Mucosa of descending colon (tissue), 3 donors: ENCODE measurements at regions of chr9 and their contacts with region 1.

Region 1: GRCh38 chr9:76441551-76442322 is 17.2 kb upstream of the GCNT1 start:
- DNase-seq: no peak
- ATAC-seq: no peak
- H3K4me3 ChIP-seq: no peak overlapping the region
- H3K4me1 ChIP-seq: no peaks in the 10 kb centered on the region
- CTCF ChIP-seq: no peak

Region 2: DNA sequence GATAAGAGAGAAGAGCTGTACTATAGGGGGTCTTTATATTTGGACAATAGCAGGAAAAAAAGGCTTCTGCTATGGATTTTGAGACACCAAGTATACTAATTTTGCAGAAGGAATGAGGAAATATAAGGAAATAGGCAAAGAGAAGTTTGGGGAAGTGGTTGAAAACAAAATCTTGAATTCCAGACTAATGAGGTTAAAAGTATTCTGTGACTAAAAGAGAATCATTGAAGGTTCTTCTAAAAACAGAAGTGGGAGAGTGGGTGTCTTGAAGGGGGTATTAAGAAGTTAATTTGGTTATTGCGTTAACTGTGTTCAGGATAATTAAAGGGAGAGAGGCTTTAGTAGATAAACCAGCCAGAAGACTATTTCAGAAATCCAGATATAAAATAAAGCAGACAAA is 196.2 kb before region 1 on chr9:
- intact Hi-C with region 1: no loop called
- DNase-seq: no peak
- ATAC-seq: no peak
- H3K4me3 ChIP-seq: no peak overlapping the region
- H3K4me1 ChIP-seq: no peaks in the 10 kb centered on the region
- CTCF ChIP-seq: no peak

Region 3: GRCh38 chr9:76302947-76303940 is 138.5 kb before region 1 on chr9:
- intact Hi-C with region 1: no loop called
- DNase-seq: no peak
- ATAC-seq: peak; percentile 87
- H3K4me3 ChIP-seq: no peak overlapping the region
- H3K4me1 ChIP-seq: no peaks in the 10 kb centered on the region
- CTCF ChIP-seq: peak; percentile 21

Region 4: DNA sequence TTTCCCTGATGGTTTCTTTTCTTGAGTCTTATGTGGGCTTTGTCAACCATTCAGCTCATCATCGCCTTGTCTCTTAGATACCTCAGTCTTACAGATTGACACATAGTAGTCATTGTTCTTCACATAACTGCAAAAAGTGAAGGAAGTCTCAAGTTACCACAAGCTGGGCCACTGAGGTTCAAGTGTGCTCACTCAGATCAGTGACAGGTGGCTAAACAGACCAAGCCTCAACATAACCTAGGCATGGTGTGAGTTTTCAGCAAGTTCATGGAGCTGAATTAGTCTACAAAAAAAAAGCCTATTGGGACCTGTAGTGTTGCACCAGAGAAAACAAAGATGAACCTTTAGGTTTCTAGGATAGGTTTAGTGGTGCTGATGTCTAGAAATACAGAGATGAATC is 105.7 kb before region 1 on chr9:
- intact Hi-C with region 1: no loop called
- DNase-seq: no peak
- ATAC-seq: no peak
- H3K4me3 ChIP-seq: no peak overlapping the region
- H3K4me1 ChIP-seq: no peaks in the 10 kb centered on the region
- CTCF ChIP-seq: no peak

Region 5: GRCh38 chr9:76521244-76521681 is 79.5 kb after region 1 on chr9:
- intact Hi-C with region 1: no loop called
- DNase-seq: no peak
- ATAC-seq: no peak
- H3K4me3 ChIP-seq: no peak overlapping the region
- H3K4me1 ChIP-seq: no peaks in the 10 kb centered on the region
- CTCF ChIP-seq: no peak

Region 6: GRCh38 chr9:76662476-76663281 is 220.9 kb after region 1 on chr9:
- intact Hi-C with region 1: loop called in 1 of 2 experiments (anchors 5 kb)
- DNase-seq: peak in 1 of 3 donors; percentile 36
- ATAC-seq: peak; percentile 60
- H3K4me3 ChIP-seq: no peak overlapping the region
- H3K4me1 ChIP-seq: no peaks in the 10 kb centered on the region
- CTCF ChIP-seq: no peak

Region 7: DNA sequence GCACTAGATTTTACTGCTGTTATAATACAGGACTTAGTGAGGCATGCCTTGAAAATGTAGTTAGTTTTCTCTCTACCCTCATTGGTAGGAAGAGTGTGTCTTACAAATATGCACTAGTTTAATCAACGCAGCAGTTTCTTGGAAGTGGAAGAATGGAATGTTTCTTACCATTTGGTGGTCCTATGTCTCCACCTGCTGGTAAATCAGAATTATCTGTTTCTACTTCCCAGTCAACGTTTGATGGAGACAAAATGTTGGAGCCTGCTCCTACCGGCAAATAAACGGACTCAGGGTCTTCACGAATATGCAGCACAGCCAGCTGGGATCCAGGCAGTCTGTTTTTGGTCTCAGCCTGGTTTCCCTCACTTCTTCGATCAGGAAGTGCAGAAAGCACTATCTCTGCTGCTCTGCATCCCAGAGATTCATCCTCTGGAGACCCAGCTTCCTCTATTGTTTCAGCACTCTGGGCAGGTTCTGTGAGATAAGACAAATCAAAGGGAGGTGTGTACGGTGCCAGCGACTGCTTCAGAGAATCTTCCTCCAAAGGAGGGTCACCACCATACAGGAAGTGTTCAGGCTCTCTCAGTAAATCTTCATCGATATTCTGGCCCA is 263.0 kb after region 1 on chr9:
- intact Hi-C with region 1: loop called in 1 of 2 experiments (anchors 10 kb)
- DNase-seq: peak in 1 of 3 donors; percentile 17
- ATAC-seq: peak; percentile 72
- H3K4me3 ChIP-seq: no peak overlapping the region
- H3K4me1 ChIP-seq: no peaks in the 10 kb centered on the region
- CTCF ChIP-seq: no peak